ENCODE measurements at regions of chr10 and their contacts with region 1.

Region 1: GRCh38 chr10:80945264-80945880 is 407.7 kb downstream of the SH2D4B start:
- DNase-seq: no peak
- ATAC-seq: peak; percentile 91
- H3K4me3 ChIP-seq: no peak overlapping the region
- H3K27ac ChIP-seq: no peak overlapping the region
- H3K4me1 ChIP-seq: no peaks in the 10 kb centered on the region
- H3K27me3 ChIP-seq: no peaks in the 10 kb centered on the region
- CTCF ChIP-seq: peak; percentile 54 to 86 (median 85)
- EP300 ChIP-seq: no peak
- POLR2A ChIP-seq: no peak
- RAD21 ChIP-seq: peak; percentile 79

Region 2: DNA sequence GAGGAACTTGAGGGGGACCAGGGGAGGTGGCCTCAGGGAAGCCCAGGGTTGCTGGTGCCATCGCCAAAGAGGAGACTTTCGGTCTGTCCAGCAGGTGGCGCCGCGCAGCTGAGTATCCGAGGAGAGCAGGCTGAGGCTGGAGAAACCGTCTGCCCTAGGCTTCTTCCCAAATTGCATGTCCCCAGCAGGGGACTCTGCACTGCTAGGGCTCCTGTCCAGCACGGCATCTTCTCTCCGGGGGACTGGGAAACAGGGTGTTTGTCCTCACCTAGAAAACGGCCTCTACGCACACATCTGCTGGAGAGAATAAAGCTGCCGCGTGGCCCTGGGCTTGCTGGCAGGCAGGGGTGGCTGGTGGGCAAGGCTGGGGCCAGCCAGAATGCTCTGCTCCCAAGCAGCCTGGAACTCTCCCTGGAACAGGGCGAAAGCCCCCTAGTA is 245.8 kb before region 1 on chr10:
- CTCF ChIA-PET with region 1: interaction called, 36 read pairs
- POLR2A ChIA-PET with region 1: no interaction called
- RAD21 ChIA-PET with region 1: interaction called, 21 read pairs
- SMC1A ChIA-PET with region 1: interaction called, 18 read pairs
- in situ Hi-C with region 1: no loop called
- intact Hi-C with region 1: loop called (anchors 1 kb)
- DNase-seq: no peak
- ATAC-seq: peak; percentile 96
- H3K4me3 ChIP-seq: no peak overlapping the region
- H3K27ac ChIP-seq: no peak overlapping the region
- H3K4me1 ChIP-seq: no peaks in the 10 kb centered on the region; the same call in 1 of the 2 replicates
- H3K27me3 ChIP-seq: no peaks in the 10 kb centered on the region
- CTCF ChIP-seq: peak; percentile 88 to 92 (median 90)
- EP300 ChIP-seq: no peak
- POLR2A ChIP-seq: no peak
- RAD21 ChIP-seq: peak; percentile 88

Region 3: DNA sequence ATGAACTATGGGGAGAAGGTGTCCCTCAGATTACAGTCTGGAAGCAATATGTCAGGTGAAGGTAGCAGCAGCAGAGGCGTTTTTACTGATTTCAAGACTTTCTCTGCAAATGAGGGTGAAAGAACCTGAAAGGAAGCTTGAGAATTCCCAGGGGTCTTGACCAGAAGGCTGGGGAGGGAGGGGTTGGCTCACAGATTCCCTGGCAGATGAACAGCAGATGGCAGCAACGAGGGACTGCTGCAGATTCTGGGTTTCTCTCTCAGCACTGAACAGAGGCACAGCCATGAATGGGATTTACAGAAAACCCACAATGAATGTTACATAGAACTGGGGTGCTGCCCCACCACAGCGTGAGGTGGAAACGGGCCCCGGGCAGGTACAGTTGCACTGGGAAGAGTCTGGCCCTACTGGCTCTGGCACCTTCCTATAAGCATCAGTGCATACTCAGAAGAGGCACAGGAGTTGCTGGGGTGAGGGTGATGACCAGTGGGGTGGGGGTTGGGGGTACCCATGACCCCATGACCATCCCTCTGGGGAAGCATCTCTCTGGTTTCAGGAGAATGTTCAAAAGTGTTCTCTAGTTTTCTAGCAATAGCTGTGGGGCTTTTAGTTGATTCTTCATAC is 89.9 kb before region 1 on chr10:
- CTCF ChIA-PET with region 1: interaction called, 20 read pairs
- POLR2A ChIA-PET with region 1: no interaction called
- RAD21 ChIA-PET with region 1: interaction called, 10 read pairs
- SMC1A ChIA-PET with region 1: interaction called, 20 read pairs
- in situ Hi-C with region 1: no loop called
- intact Hi-C with region 1: loop called (anchors 5 kb)
- DNase-seq: peak; percentile 13
- ATAC-seq: peak; percentile 92
- H3K4me3 ChIP-seq: no peak overlapping the region
- H3K27ac ChIP-seq: no peak overlapping the region
- H3K4me1 ChIP-seq: no peaks in the 10 kb centered on the region
- H3K27me3 ChIP-seq: peaks cover 0 to 2% of the 10 kb centered on the region in 2 experiments; a peak in 1 of 4 replicates
- CTCF ChIP-seq: peak; percentile 48 to 72 (median 67); a peak in 5 of 6 replicates
- EP300 ChIP-seq: no peak
- POLR2A ChIP-seq: no peak
- RAD21 ChIP-seq: peak; percentile 49

Region 4: GRCh38 chr10:81367132-81367531 is 421.8 kb after region 1 on chr10:
- CTCF ChIA-PET with region 1: no interaction called
- POLR2A ChIA-PET with region 1: no interaction called
- RAD21 ChIA-PET with region 1: no interaction called
- SMC1A ChIA-PET with region 1: no interaction called
- in situ Hi-C with region 1: no loop called
- intact Hi-C with region 1: no loop called
- DNase-seq: no peak
- ATAC-seq: no peak
- H3K4me3 ChIP-seq: no peak overlapping the region
- H3K27ac ChIP-seq: no peak overlapping the region
- H3K4me1 ChIP-seq: no peaks in the 10 kb centered on the region
- H3K27me3 ChIP-seq: no peaks in the 10 kb centered on the region
- CTCF ChIP-seq: no peak
- EP300 ChIP-seq: no peak
- POLR2A ChIP-seq: no peak
- RAD21 ChIP-seq: no peak

Measured in GM12878 (cell line).